ENCODE measurements at regions of chr5 and their contacts with region 1.

Region 1: DNA sequence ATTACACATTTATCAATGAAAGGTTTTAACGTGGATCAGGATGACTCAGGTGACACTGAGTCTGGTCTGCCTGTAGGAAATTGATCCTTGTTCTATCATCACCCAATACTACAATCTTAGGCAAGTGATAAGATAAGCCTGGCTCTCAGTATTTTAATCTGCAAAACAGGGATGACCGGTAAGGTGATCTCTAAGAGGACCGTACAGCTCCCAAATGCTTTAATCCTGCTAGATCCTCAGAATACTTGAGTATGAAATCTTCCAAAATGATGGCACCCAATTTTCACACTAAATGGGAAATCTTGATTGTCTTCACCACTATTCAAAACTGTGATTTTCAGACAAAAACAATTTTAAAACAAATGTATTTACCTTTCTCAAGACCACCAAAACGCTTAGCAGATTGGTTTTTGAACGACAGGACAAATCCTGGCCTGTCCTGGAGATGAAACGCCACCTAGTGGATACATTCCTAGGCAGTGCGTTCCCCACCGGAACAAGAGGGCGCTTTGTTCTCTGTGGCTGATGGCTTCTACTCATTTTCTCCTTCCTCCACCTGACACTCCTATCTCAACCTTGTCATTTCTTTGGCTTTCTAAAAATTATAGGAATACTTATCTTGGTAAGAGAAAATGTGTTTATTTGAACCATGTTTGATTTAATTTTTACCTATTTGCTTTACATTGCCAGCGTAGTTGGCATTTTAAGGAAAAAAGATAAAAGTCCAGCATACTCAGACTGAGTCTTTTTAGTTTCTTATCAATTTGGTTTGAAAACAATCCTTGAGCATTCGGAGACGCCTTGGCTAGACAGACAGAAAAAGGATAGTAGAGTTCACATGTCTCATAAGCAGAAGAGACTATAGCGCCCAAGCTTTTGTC is 41.2 kb upstream of the VCAN start:
- DNase-seq: peak; percentile 67
- H3K4me3 ChIP-seq: no peak overlapping the region
- H3K27ac ChIP-seq: no peak overlapping the region
- H3K4me1 ChIP-seq: no peaks in the 10 kb centered on the region
- H3K27me3 ChIP-seq: peaks cover 5 to 8% of the 10 kb centered on the region in 2 experiments
- CTCF ChIP-seq: peak; percentile 89 to 96
- POLR2A ChIP-seq: no peak

Region 2: DNA sequence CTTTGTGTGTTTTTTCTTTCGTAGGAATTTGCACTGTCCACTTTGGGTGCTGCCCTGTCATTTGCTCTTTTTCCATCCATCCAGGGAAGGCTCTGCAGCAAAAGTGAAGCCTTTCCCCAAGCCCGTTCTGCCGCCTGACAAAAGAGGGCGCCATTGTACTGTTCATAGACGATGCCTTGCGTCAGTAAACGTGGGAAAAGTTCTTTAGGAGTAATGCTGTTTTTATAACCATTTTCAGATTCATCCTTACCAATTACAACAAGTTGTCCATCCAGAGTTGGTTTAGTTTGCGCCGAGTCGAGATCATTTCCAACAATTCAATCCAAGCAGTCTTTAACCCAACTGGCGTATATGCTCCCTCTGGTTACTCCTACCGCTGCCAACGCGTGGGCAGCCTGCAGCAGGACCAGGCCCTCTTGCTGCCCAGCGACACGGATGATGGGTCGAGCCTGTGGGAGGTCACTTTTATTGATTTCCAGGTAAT is 1118.0 kb before region 1 on chr5:
- CTCF ChIA-PET with region 1: interaction called, 15 read pairs
- POLR2A ChIA-PET with region 1: no interaction called
- dilution Hi-C with region 1: no loop called
- intact Hi-C with region 1: loop called (anchors 2 kb)
- DNase-seq: peak; percentile 63
- H3K4me3 ChIP-seq: no peak overlapping the region
- H3K27ac ChIP-seq: no peak overlapping the region
- H3K4me1 ChIP-seq: peaks cover 7% of the 10 kb centered on the region
- H3K27me3 ChIP-seq: peaks cover 3 to 4% of the 10 kb centered on the region in 2 experiments
- CTCF ChIP-seq: peak; percentile 77 to 90
- POLR2A ChIP-seq: no peak

Region 3: DNA sequence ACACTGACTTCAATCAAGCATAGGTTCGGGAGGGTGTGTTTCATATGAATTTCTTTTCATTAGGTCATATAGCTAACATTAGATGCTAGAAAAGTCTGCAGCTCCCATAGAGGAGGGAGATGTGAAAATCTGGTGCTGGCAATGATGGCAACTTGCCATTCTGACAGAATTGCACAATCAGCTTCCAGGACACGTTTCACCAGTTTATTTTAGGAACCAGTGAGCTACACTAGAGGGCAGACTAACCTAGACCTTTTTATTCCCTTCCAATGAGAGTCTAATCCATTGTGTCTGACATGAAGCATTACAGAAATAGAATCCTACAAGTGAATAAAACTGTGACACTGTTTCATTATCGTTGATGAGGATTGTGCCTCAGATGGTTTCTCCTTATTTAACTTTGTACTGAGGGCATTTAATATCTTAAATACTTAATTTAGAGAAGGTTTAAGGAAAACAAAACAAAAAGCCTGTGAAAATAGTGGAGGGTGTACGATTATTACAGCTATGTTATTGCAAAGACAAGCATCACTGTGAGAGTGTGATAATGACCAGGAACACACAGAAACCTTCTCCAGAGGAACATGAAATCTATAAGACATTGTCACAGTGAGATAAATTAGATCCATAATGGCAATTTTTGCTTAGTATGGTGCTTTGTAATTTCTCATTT is 788.9 kb before region 1 on chr5:
- CTCF ChIA-PET with region 1: interaction called, 18 read pairs
- POLR2A ChIA-PET with region 1: no interaction called
- dilution Hi-C with region 1: no loop called
- intact Hi-C with region 1: loop called (anchors 1 kb)
- DNase-seq: peak; percentile 81
- H3K4me3 ChIP-seq: no peak overlapping the region
- H3K27ac ChIP-seq: no peak overlapping the region
- H3K4me1 ChIP-seq: no peaks in the 10 kb centered on the region
- H3K27me3 ChIP-seq: peaks cover 2% of the 10 kb centered on the region in 2 experiments
- CTCF ChIP-seq: peak; percentile 39 to 56
- POLR2A ChIP-seq: no peak

Region 4: GRCh38 chr5:83095957-83096539 is 334.3 kb before region 1 on chr5:
- CTCF ChIA-PET with region 1: no interaction called
- POLR2A ChIA-PET with region 1: no interaction called
- dilution Hi-C with region 1: no loop called
- intact Hi-C with region 1: loop called (anchors 10 kb)
- DNase-seq: peak; percentile 51
- H3K4me3 ChIP-seq: no peak overlapping the region
- H3K27ac ChIP-seq: no peak overlapping the region
- H3K4me1 ChIP-seq: peaks cover 16% of the 10 kb centered on the region
- H3K27me3 ChIP-seq: peaks cover 17 to 24% of the 10 kb centered on the region in 2 experiments
- CTCF ChIP-seq: no peak
- POLR2A ChIP-seq: no peak

Region 5: GRCh38 chr5:83401122-83401731 is 29.1 kb before region 1 on chr5:
- CTCF ChIA-PET with region 1: interaction called, 12 read pairs
- POLR2A ChIA-PET with region 1: no interaction called
- dilution Hi-C with region 1: no loop called
- intact Hi-C with region 1: no loop called
- DNase-seq: no peak
- H3K4me3 ChIP-seq: no peak overlapping the region
- H3K27ac ChIP-seq: no peak overlapping the region
- H3K4me1 ChIP-seq: peaks cover 11% of the 10 kb centered on the region
- H3K27me3 ChIP-seq: no peaks in the 10 kb centered on the region
- CTCF ChIP-seq: no peak
- POLR2A ChIP-seq: no peak

Region 6: GRCh38 chr5:83450967-83451248 is 20.5 kb after region 1 on chr5:
- CTCF ChIA-PET with region 1: interaction called, 13 read pairs
- POLR2A ChIA-PET with region 1: no interaction called
- dilution Hi-C with region 1: no loop called
- intact Hi-C with region 1: no loop called
- DNase-seq: no peak
- H3K4me3 ChIP-seq: no peak overlapping the region
- H3K27ac ChIP-seq: no peak overlapping the region
- H3K4me1 ChIP-seq: peaks cover 8% of the 10 kb centered on the region
- H3K27me3 ChIP-seq: peaks cover 4 to 5% of the 10 kb centered on the region in 2 experiments
- CTCF ChIP-seq: no peak
- POLR2A ChIP-seq: no peak

Region 7: DNA sequence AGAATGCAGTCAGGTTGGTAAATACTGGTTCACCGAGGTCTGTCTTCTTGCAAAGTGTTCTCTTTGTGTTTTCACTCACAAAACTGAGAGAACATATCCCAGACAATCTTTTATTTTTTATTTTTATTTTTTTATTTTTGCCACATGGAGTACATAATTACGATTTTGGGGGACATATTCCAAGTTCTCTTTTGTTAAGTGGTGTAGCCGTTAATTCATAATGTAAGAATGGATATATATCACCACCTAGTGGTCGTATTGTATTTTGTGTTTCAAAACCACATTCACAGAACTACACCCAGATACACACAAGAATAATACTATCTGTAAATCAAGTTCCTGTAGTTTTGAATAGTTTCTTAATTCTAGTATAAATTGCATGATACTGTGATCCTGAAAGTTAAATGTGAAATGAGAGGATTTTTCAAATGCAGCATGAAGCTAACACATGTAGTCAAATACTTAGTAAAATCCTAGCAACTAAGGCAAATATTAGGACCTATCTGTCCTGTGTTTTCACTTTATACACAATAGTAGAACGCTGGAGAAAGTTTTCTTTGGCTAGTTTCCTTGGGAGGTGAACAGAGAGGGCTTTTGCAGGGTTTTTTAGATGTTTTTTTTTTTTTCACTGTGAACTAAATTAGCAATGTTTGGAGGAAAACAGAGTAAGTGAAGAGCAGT is 133.8 kb after region 1 on chr5:
- CTCF ChIA-PET with region 1: interaction called, 4 read pairs
- POLR2A ChIA-PET with region 1: no interaction called
- dilution Hi-C with region 1: no loop called
- intact Hi-C with region 1: loop called (anchors 1 kb)
- DNase-seq: peak; percentile 81
- H3K4me3 ChIP-seq: no peak overlapping the region
- H3K27ac ChIP-seq: no peak overlapping the region
- H3K4me1 ChIP-seq: peaks cover 4% of the 10 kb centered on the region
- H3K27me3 ChIP-seq: peaks cover 0 to 8% of the 10 kb centered on the region in 2 experiments
- CTCF ChIP-seq: peak; percentile 16 to 24
- POLR2A ChIP-seq: no peak

Region 8: GRCh38 chr5:83583859-83584258 is 153.5 kb after region 1 on chr5:
- CTCF ChIA-PET with region 1: no interaction called
- POLR2A ChIA-PET with region 1: no interaction called
- dilution Hi-C with region 1: no loop called
- intact Hi-C with region 1: no loop called
- DNase-seq: peak; percentile 77
- H3K4me3 ChIP-seq: no peak overlapping the region
- H3K27ac ChIP-seq: no peak overlapping the region
- H3K4me1 ChIP-seq: peaks cover 26% of the 10 kb centered on the region
- H3K27me3 ChIP-seq: no peaks in the 10 kb centered on the region
- CTCF ChIP-seq: no peak
- POLR2A ChIP-seq: no peak